K562 (cell line): ENCODE measurements at regions of chr1 and their contacts with region 1.

Region 1: GRCh38 chr1:8878448-8879347 is at the start of gene ENO1:
- DNase-seq: peak; percentile 99 to 100 (median 100)
- ATAC-seq: peak; percentile 85
- H3K4me3 ChIP-seq: peak within 1 kb of the TSS; percentile 82
- H3K27ac ChIP-seq: peak within 1 kb of the TSS; percentile 99
- H3K4me1 ChIP-seq: peaks cover 30 to 37% of the 10 kb centered on the region in 2 experiments
- H3K27me3 ChIP-seq: no peaks in the 10 kb centered on the region
- CTCF ChIP-seq: no peak
- EP300 ChIP-seq: no peak; the same call in 1 of the 2 replicates
- POLR2A ChIP-seq: peak; percentile 99
- RAD21 ChIP-seq: no peak; a peak in 1 of 4 replicates
- polyA plus RNA-seq, gene ENO1: 6,249 to 7,472 TPM

Region 2: GRCh38 chr1:8892026-8892425 is 13.3 kb after region 1 on chr1:
- CTCF ChIA-PET with region 1: no interaction called
- POLR2A ChIA-PET with region 1: interaction called, 10 read pairs
- in situ Hi-C with region 1: no loop called
- intact Hi-C with region 1: no loop called
- DNase-seq: no peak
- ATAC-seq: no peak
- H3K4me3 ChIP-seq: no peak overlapping the region
- H3K27ac ChIP-seq: no peak overlapping the region
- H3K4me1 ChIP-seq: peaks cover 0 to 3% of the 10 kb centered on the region in 2 experiments; a peak in 2 of 5 replicates
- H3K27me3 ChIP-seq: peaks cover 0 to 9% of the 10 kb centered on the region in 2 experiments; a peak in 1 of 5 replicates
- CTCF ChIP-seq: no peak
- EP300 ChIP-seq: no peak
- POLR2A ChIP-seq: no peak
- RAD21 ChIP-seq: no peak

Region 3: GRCh38 chr1:8903908-8904650 is 25.4 kb after region 1 on chr1:
- CTCF ChIA-PET with region 1: no interaction called
- POLR2A ChIA-PET with region 1: interaction called, 4 read pairs
- in situ Hi-C with region 1: no loop called
- intact Hi-C with region 1: loop called (anchors 2 kb)
- DNase-seq: no peak
- ATAC-seq: no peak
- H3K4me3 ChIP-seq: no peak overlapping the region
- H3K27ac ChIP-seq: no peak overlapping the region
- H3K4me1 ChIP-seq: peaks cover 9 to 15% of the 10 kb centered on the region in 2 experiments
- H3K27me3 ChIP-seq: no peaks in the 10 kb centered on the region
- CTCF ChIP-seq: no peak
- EP300 ChIP-seq: no peak
- POLR2A ChIP-seq: no peak
- RAD21 ChIP-seq: no peak